Endothelial cell of umbilical vein (primary cell): ENCODE measurements at regions of chr7 and their contacts with region 1.

Region 1: GRCh38 chr7:90629297-90629918 is 33.3 kb downstream of the CDK14 start:
- DNase-seq: peak; percentile 75
- H3K4me3 ChIP-seq: no peak overlapping the region
- H3K27ac ChIP-seq: no peak overlapping the region
- H3K4me1 ChIP-seq: peaks cover 18% of the 10 kb centered on the region
- H3K27me3 ChIP-seq: no peaks in the 10 kb centered on the region
- CTCF ChIP-seq: peak; percentile 56 to 60
- POLR2A ChIP-seq: no peak

Region 2: GRCh38 chr7:90552521-90552920 is 76.9 kb before region 1 on chr7:
- CTCF ChIA-PET with region 1: interaction called, 7 read pairs
- POLR2A ChIA-PET with region 1: no interaction called
- dilution Hi-C with region 1: no loop called
- intact Hi-C with region 1: loop called (anchors 1 kb)
- DNase-seq: peak; percentile 46
- H3K4me3 ChIP-seq: no peak overlapping the region
- H3K27ac ChIP-seq: no peak overlapping the region
- H3K4me1 ChIP-seq: no peaks in the 10 kb centered on the region
- H3K27me3 ChIP-seq: peaks cover 0 to 5% of the 10 kb centered on the region in 2 experiments
- CTCF ChIP-seq: peak in 1 of 2 donors; percentile 3
- POLR2A ChIP-seq: no peak

Region 3: DNA sequence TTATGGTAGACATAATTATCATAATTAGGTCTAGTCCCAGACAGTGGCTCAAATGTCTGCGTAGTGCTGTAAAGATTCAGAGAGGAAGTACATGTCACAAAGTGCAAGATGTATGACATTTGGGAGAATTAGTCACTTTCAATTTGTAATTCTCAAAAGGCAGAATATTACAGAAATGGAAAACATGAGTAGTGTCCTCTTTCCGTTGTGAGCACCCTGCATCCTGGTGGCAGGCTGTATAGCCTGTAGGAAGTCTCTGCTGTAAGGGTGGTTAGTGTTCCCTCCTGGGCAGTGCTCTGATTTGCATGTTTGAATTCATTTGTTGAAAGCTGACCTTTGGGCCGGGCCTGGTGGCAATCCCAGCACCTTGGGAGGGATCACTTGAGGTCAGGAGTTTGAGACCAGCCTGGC is 16.3 kb before region 1 on chr7:
- CTCF ChIA-PET with region 1: interaction called, 4 read pairs
- POLR2A ChIA-PET with region 1: no interaction called
- dilution Hi-C with region 1: no loop called
- intact Hi-C with region 1: loop called (anchors 2 kb)
- DNase-seq: peak; percentile 61
- H3K4me3 ChIP-seq: no peak overlapping the region
- H3K27ac ChIP-seq: peak overlapping the region; percentile 15
- H3K4me1 ChIP-seq: peaks cover 11% of the 10 kb centered on the region
- H3K27me3 ChIP-seq: no peaks in the 10 kb centered on the region
- CTCF ChIP-seq: no peak
- POLR2A ChIP-seq: no peak

Region 4: GRCh38 chr7:90677486-90678404 is 48.3 kb after region 1 on chr7:
- CTCF ChIA-PET with region 1: no interaction called
- POLR2A ChIA-PET with region 1: no interaction called
- dilution Hi-C with region 1: no loop called
- intact Hi-C with region 1: no loop called
- DNase-seq: no peak
- H3K4me3 ChIP-seq: no peak overlapping the region
- H3K27ac ChIP-seq: no peak overlapping the region
- H3K4me1 ChIP-seq: no peaks in the 10 kb centered on the region
- H3K27me3 ChIP-seq: no peaks in the 10 kb centered on the region
- CTCF ChIP-seq: no peak
- POLR2A ChIP-seq: no peak

Region 5: DNA sequence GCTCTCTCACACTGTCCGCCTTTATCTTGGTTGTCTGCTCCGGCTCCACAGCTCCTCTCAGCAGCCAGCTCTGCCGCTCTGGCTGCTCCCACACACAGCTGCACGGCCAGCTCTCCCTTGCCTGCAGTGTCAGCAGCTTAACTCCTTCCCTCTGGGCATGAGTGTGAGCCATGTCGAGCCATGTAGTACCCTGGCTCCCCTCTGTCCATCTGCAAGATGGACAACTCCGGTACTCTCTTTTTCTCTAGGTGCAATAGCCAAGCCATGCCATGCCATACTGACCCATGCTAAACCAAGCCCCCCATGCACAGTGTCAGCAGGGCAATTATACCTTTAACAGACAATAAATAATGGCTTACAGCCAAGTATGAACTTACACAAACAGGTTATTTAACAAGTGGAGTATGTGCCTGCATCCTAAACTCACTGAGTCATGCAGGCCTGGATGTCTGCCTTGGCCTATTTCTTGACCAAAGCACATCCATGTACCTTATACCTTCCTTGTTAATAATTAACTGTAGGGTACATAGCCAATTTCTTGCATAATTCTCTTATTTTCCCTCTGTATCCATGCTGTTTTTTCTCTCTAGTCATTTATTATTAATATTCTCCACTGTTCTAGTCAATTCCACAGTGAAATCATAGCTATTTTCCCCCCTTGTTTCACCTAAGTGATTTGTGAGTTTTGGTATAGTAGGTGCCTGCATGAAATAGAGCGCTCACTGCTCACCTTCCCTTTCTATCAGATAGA is 137.6 kb after region 1 on chr7:
- CTCF ChIA-PET with region 1: no interaction called
- POLR2A ChIA-PET with region 1: no interaction called
- dilution Hi-C with region 1: no loop called
- intact Hi-C with region 1: no loop called
- DNase-seq: no peak
- H3K4me3 ChIP-seq: no peak overlapping the region
- H3K27ac ChIP-seq: no peak overlapping the region
- H3K4me1 ChIP-seq: no peaks in the 10 kb centered on the region
- H3K27me3 ChIP-seq: no peaks in the 10 kb centered on the region
- CTCF ChIP-seq: no peak
- POLR2A ChIP-seq: no peak